ENCODE measurements at regions of chr2 and their contacts with region 1.

Region 1: DNA sequence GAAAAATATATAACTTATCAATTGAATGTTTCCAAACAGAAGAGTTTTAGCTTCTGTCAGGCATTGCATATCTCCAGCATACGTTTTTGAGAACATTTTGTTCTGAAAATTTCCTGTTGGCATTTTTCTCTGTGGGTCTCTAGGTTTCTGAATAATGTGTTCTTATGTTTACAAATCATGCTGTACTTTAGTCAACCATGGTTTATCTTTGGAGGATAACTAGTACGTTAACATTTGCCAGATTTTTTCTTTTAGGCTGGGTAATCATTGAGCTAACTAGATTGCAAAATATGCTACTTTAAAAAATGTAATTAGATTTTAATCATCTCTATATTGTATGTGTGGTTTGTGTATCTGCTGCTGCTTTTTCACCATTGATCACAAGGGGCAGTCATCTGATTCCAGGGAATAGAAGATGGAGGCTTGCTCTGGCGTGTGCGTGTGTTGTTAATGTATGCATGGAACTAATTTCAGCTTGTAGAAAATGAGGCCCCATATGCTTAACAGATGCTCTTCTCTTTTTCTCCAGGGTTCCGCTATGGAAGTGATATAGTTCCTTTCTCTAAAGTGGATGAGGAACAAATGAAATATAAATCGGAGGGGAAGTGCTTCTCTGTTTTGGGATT is 21.3 kb downstream of the XRCC5 start:
- DNase-seq: no peak
- H3K4me3 Mint-ChIP-seq: no peak overlapping the region
- H3K27ac Mint-ChIP-seq: peak overlapping the region; percentile 10
- H3K4me1 Mint-ChIP-seq: peaks cover 66% of the 10 kb centered on the region
- H3K27me3 Mint-ChIP-seq: no peaks in the 10 kb centered on the region

Region 2: DNA sequence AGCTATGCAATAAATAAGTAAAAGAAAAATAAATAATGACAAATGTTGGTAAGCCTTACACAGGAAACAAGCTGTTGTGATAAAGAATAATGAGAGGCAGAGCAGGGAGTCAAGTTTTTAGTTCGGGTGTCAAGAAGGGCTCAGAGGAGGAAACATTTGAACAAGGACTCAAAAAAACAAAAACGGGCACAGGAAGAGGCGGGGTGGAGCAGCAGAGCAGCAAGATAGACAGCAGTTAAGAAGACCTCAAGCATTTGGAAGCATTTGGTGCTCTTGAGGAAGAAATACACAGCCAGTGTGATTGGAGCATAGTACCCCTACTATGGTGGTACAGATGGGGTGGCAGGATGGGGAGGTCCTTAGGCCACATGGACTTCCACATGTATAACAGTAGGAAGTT is 45.9 kb before region 1 on chr2:
- CTCF ChIA-PET with region 1: no interaction called
- POLR2A ChIA-PET with region 1: no interaction called
- DNase-seq: peak; percentile 53
- H3K4me3 Mint-ChIP-seq: peak overlapping the region; percentile 56
- H3K27ac Mint-ChIP-seq: peak overlapping the region; percentile 92
- H3K4me1 Mint-ChIP-seq: peaks cover 60% of the 10 kb centered on the region
- H3K27me3 Mint-ChIP-seq: no peaks in the 10 kb centered on the region

Region 3: DNA sequence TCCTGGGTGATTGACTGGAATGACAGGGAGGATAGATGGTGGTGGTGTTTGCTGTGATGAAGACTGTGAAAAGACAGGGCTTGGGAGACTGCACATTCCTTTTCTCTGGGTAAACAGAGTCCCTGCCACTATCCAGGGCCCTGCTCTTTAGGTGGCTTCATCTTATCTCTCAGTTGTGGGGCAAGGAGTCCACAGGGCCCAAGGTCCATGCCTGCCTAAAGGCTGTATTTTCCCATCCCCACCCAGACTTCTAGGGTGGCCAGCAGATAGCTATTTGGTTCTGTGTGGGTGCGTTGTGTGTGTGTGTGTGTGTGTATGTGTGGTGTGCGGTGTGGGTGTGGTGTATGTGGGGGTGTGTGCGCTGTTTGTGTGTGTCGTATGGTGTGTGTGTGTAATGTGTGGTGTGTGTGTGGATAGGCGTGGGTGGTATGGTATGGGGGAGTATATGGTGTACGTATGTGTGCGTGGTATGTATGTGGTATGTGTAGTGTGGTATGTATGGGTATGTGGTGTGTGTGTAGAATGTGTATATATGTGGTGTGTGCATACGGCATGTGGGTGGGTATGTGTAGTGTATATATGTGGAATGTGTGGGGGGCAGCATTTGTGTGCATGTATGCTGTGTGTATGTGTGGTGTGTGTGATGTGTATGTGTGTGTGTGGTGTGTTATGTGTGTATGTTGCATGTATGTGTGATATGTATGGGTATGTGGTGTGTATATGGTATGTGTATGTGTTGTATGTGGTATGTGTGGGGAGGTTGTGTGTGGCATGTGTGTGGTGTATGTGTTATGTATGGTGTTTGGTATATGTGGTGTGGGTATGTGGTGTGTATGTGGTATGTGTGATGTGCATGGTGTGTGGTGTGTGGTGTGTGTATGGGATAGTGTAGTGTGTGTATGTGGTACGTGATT is 31.8 kb before region 1 on chr2:
- CTCF ChIA-PET with region 1: no interaction called
- POLR2A ChIA-PET with region 1: no interaction called
- DNase-seq: no peak
- H3K4me3 Mint-ChIP-seq: no peak overlapping the region
- H3K27ac Mint-ChIP-seq: no peak overlapping the region
- H3K4me1 Mint-ChIP-seq: peaks cover 5% of the 10 kb centered on the region
- H3K27me3 Mint-ChIP-seq: no peaks in the 10 kb centered on the region

Region 4: GRCh38 chr2:216114714-216115557 is 15.5 kb before region 1 on chr2:
- CTCF ChIA-PET with region 1: interaction called, 13 read pairs
- POLR2A ChIA-PET with region 1: interaction called, 3 read pairs
- DNase-seq: peak; percentile 98
- H3K4me3 Mint-ChIP-seq: peak overlapping the region; percentile 84
- H3K27ac Mint-ChIP-seq: peak overlapping the region; percentile 90
- H3K4me1 Mint-ChIP-seq: peaks cover 96% of the 10 kb centered on the region
- H3K27me3 Mint-ChIP-seq: no peaks in the 10 kb centered on the region

Region 5: DNA sequence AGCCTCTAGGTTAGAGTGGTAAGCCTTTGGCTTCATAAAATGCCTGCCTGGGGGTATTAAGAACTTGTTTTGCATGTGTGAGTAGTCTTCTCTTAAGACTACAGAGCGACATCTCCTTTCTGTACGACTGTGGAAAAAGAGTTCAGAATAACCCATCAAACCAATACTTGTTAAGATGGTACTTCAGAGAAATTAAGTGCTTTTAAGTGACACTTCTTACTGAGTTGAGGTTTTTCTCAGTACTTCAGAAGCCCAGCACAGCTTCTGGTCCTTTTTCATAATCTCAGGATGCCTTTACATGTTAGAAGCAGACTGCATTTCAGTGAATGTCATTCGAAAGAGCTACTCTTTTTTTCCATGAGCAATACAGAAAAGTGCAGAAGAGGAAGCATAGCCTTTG is 10.5 kb before region 1 on chr2:
- CTCF ChIA-PET with region 1: interaction called, 11 read pairs
- POLR2A ChIA-PET with region 1: interaction called, 3 read pairs
- DNase-seq: peak; percentile 31
- H3K4me3 Mint-ChIP-seq: peak overlapping the region; percentile 33
- H3K27ac Mint-ChIP-seq: peak overlapping the region; percentile 87
- H3K4me1 Mint-ChIP-seq: peaks cover 81% of the 10 kb centered on the region
- H3K27me3 Mint-ChIP-seq: no peaks in the 10 kb centered on the region

Region 6: GRCh38 chr2:216287251-216287650 is 156.8 kb after region 1 on chr2:
- CTCF ChIA-PET with region 1: no interaction called
- POLR2A ChIA-PET with region 1: no interaction called
- DNase-seq: no peak
- H3K4me3 Mint-ChIP-seq: no peak overlapping the region
- H3K27ac Mint-ChIP-seq: no peak overlapping the region
- H3K4me1 Mint-ChIP-seq: no peaks in the 10 kb centered on the region
- H3K27me3 Mint-ChIP-seq: no peaks in the 10 kb centered on the region

Measured in activated CD4-positive, alpha-beta T cell treated with anti-CD3 and anti-CD28 coated beads, Interleukin-2, amount 10 ng/mL, durations not matched to agents 7 days and 5 days (primary cell).